ENCODE measurements at regions of chr2 and their contacts with region 1.

Region 1: DNA sequence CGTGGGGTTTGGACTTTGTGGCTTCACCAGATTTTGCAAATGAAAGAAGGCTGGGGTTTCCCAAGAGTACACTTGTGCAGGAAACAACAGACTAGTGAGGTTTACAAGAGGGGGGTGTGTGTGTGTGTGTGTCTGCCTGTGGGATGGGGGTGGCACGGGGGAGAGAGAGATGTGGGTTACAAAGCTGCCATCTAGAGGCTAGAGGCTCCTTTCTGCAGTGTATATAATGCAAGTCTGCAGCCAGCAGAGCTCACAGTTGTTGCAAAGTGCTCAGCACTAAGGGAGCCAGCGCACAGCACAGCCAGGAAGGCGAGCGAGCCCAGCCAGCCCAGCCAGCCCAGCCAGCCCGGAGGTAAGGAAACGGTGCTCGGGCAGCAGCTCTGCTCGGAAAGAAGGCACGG is at the start of gene ACKR3:
- DNase-seq: peak; percentile 50 to 93
- H3K4me3 ChIP-seq: peak within 1 kb of the TSS; percentile 72 to 74
- H3K27ac ChIP-seq: peak within 1 kb of the TSS; percentile 94 to 97
- H3K4me1 ChIP-seq: peaks cover 4 to 37% of the 10 kb centered on the region in 2 donors
- H3K27me3 ChIP-seq: no peaks in the 10 kb centered on the region
- CTCF ChIP-seq: peak; percentile 22 to 55 (median 44)
- total RNA-seq, gene ACKR3: 75.6 TPM

Region 2: GRCh38 chr2:236352761-236353593 is 216.6 kb before region 1 on chr2:
- intact Hi-C with region 1: loop called (anchors 5 kb)
- DNase-seq: no peak
- H3K4me3 ChIP-seq: no peak overlapping the region
- H3K27ac ChIP-seq: no peak overlapping the region
- H3K4me1 ChIP-seq: no peaks in the 10 kb centered on the region
- H3K27me3 ChIP-seq: no peaks in the 10 kb centered on the region
- CTCF ChIP-seq: peak; percentile 72 to 84 (median 74)

Region 3: GRCh38 chr2:236687296-236687965 is 117.9 kb after region 1 on chr2:
- intact Hi-C with region 1: loop called (anchors 5 kb)
- DNase-seq: peak in 1 of 2 donors; percentile 75
- H3K4me3 ChIP-seq: no peak overlapping the region
- H3K27ac ChIP-seq: peak overlapping the region; percentile 54 to 75
- H3K4me1 ChIP-seq: peaks cover 18 to 31% of the 10 kb centered on the region in 2 donors
- H3K27me3 ChIP-seq: no peaks in the 10 kb centered on the region
- CTCF ChIP-seq: no peak

Region 4: GRCh38 chr2:236862961-236863728 is 293.6 kb after region 1 on chr2:
- intact Hi-C with region 1: no loop called
- DNase-seq: peak in 1 of 2 donors; percentile 43
- H3K4me3 ChIP-seq: no peak overlapping the region
- H3K27ac ChIP-seq: no peak overlapping the region
- H3K4me1 ChIP-seq: no peaks in the 10 kb centered on the region
- H3K27me3 ChIP-seq: no peaks in the 10 kb centered on the region
- CTCF ChIP-seq: no peak

Region 5: DNA sequence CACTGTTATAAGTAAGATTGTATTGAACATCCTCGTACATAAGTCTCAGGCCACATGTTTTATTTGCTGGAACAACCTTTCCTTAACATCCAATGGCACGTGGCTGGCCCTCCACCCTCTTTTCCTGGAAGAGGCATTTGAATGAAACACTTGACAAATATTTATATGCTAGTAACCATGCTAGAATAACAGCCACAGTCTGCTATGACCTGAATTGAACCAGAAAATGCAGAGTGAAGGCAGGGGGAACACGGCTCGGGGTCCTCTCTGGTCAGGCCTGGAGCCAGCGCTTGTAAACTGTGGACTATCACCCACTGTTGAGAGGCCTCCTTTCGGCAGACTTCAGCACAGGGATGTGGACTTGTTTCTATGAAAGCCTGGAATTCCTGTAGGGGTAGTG is 318.0 kb after region 1 on chr2:
- intact Hi-C with region 1: loop called (anchors 2 kb)
- DNase-seq: peak in 1 of 2 donors; percentile 91
- H3K4me3 ChIP-seq: peak overlapping the region in 1 of 2 donors; percentile 7
- H3K27ac ChIP-seq: peak overlapping the region; percentile 89 to 93
- H3K4me1 ChIP-seq: peaks cover 9 to 18% of the 10 kb centered on the region in 2 donors
- H3K27me3 ChIP-seq: no peaks in the 10 kb centered on the region
- CTCF ChIP-seq: peak in 1 of 3 experiments; percentile 7

Region 6: DNA sequence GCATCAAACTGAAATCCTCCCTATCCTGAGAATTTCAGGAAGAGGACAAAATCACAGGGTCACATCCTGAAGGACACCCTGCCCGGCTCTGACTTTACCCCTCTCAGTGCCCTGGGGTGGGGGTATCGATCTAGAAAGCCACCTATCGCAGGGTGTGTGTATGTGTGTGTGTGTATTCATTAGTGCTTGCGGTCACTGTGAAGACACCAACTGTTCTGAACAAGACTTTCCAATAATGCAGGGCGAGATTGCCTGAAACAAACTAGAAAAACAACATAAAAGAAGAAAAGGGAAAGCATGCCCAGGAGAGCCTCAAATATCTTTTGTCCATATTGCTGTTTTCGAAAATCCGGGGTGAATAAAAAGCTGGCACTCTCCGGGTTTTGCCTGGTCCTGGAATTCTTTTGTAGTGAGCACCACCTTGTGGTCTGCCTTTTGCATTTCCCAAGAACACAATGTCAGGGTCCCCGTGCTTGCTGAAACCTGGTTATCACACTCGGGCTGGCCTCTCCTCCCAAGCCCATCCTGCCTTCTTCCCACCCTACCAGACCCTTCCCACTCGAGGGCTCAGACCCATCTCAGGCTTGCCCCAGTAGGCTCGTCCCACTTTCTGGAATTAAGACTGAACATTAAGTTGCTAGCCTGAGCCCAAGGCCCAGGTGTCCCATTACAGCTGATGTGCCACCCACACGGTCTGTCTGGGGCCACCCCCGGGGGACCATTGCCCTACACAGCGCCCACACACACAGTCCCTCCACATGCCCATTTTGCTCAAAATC is 491.1 kb after region 1 on chr2:
- intact Hi-C with region 1: loop called (anchors 5 kb)
- DNase-seq: no peak
- H3K4me3 ChIP-seq: peak overlapping the region in 1 of 2 donors; percentile 31
- H3K27ac ChIP-seq: no peak overlapping the region
- H3K4me1 ChIP-seq: peaks cover 0 to 15% of the 10 kb centered on the region in 2 donors
- H3K27me3 ChIP-seq: no peaks in the 10 kb centered on the region
- CTCF ChIP-seq: peak; percentile 61 to 74 (median 71)

Measured in ascending aorta (tissue), 2 donors.